ENCODE measurements at regions of chr6 and their contacts with region 1.

Region 1: DNA sequence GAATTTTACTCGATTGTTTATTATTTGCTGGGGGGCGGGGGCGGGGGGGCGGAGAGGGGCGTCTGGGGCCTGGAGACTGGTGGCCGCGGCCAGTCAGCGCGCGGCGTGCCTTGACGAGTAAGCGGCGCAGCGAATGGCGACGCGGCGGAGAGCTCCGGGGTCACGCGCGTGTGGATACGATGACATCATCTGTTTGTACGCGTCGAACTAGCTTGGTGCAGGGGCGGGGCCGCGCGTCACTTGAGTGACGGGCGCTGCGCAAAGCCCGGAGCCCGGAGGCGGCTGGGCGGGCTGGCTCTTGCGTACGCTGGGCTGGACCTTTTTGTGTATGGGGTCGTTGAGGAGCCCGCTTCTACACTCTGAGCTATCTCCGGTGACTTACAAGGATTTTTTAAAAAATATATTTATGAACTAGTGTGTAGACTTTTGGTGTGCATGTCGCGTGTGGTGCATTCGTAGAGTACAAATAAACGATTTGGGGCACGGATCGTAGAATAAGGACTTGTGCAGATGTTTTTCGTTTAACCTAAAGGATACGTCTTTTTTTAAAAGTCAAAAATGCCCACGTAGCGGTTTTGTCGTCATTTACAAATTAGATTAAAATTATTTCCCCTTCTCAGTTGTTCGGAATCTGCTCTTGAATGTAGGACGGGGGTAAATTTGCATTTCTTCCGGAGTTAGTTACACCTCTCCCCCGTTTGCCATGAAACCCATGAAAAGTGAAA is 2.2 kb upstream of the FOXO3 start:
- DNase-seq: peak; percentile 94 to 99 (median 96)
- ATAC-seq: peak; percentile 67 to 74
- H3K4me3 Mint-ChIP-seq: peak overlapping the region; percentile 90 to 98 (median 96)
- H3K27ac Mint-ChIP-seq: peak overlapping the region; percentile 93 to 100 (median 98)
- H3K4me1 Mint-ChIP-seq: peaks cover 13 to 33% (median 22%) of the 10 kb centered on the region in 4 donors
- H3K27me3 Mint-ChIP-seq: peaks cover 0 to 6% (median 0%) of the 10 kb centered on the region in 5 donors

Region 2: DNA sequence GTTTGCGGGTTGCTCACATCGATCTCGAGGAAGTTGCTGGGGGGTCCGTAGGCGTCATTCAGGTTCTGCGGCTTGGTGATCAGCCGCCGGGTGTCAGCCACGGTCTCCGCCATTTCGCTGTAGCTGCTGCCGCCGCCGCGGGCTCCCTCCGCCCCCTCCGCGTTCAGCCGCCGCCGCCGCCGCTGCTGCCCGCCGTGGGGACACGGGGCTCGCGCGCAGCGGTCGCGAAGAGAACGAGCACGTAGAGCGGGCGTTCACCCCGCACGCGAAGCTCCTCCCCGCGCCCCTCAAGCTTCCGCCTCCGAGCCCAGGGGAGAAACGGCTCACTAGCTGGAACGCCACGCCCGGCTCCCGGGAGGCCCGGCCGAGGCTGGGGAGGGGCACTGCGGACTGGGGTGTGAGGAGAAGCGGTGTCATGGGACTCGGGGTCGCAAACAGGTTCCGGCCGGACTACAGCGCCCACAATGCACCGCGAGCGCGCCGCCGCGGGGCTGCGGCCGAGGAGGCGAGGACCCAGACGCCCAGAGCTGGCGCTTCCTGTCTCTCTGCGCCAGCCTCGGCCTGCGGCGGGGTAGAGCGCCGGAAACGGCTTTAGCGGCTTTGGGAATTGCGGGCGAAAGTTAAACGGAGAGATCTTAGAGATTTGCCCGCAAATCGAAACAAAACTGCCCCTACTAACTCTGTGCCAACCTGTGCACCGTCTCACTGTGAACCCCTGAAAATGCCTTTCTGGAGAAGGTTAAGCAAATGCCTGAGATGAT is 297.5 kb before region 1 on chr6 and contains the start of gene SNX3:
- POLR2A ChIA-PET with region 1: interaction called, 15 read pairs
- DNase-seq: peak; percentile 78 to 95 (median 87)
- ATAC-seq: peak; percentile 82 to 83
- H3K4me3 Mint-ChIP-seq: peak within 1 kb of the TSS; percentile 86 to 97 (median 92)
- H3K27ac Mint-ChIP-seq: peak within 1 kb of the TSS; percentile 93 to 99 (median 96)
- H3K4me1 Mint-ChIP-seq: peaks cover 5 to 44% (median 27%) of the 10 kb centered on the region in 4 donors
- H3K27me3 Mint-ChIP-seq: no peaks in the 10 kb centered on the region
- polyA plus RNA-seq, gene SNX3: 163 to 227 (median 176) TPM

Region 3: DNA sequence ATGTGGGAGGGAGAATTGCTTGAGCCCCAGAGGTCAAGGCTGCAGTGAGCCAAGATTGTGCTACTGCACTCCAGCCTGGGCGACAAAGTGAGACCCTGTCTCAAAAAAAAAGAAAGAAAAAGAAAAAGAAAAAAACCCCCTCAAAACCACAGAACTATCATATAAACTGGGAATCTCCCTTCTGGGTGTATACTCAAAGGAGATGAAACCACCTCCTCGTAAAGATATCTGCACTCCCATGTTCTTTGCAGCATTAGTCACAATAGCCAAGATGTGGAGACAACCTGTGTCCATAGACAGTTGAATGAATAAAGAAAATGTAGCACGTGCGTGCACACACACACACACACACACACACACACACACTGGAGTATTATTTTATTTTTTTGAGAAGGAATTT is 272.2 kb before region 1 on chr6:
- POLR2A ChIA-PET with region 1: no interaction called
- DNase-seq: no peak
- ATAC-seq: no peak
- H3K4me3 Mint-ChIP-seq: no peak overlapping the region
- H3K27ac Mint-ChIP-seq: no peak overlapping the region
- H3K4me1 Mint-ChIP-seq: peaks cover 0 to 5% (median 2%) of the 10 kb centered on the region in 4 donors
- H3K27me3 Mint-ChIP-seq: no peaks in the 10 kb centered on the region

Region 4: DNA sequence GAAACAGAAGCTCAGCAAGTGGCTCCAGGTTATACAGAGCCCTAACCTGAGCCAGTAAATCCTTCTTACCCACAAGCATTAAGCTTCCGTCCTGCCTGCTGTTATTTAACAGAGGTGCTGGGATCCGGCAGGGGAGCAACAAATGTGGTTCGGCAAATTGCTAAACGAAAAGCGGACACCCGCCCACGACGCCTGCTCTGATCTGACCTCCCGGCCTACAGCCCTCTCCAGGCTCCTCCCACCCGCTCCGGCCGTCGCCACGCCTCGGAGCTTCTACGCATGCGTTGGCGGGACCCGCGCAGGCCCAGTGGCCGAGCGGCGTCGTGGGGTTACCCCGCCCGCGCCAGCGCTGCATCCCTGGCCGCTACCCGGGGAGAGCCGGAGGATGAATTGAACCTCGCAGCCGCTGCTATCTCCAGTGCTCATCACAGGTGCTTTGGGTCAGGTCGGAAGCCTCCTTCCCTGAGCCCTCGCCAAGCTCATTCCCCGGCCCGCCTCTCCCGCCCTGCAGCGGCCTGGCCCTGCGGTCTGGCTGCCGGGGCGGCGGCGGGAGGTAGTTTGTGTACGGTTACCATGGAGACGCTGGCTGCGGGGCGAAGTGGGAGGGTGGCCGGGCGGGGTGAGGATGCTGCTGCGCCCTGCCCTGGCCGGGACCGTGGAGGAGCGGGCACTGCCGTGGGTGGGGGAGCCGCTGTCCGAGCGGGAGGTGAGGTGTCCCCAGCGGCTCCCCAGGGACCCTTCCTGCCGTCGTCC is 289.8 kb after region 1 on chr6 and contains the start of gene ARMC2:
- POLR2A ChIA-PET with region 1: interaction called, 10 read pairs
- DNase-seq: peak; percentile 72 to 94 (median 84)
- ATAC-seq: peak; percentile 80 to 89
- H3K4me3 Mint-ChIP-seq: peak within 1 kb of the TSS; percentile 84 to 92 (median 90)
- H3K27ac Mint-ChIP-seq: peak within 1 kb of the TSS; percentile 76 to 95 (median 91)
- H3K4me1 Mint-ChIP-seq: peaks cover 10 to 33% (median 15%) of the 10 kb centered on the region in 4 donors
- H3K27me3 Mint-ChIP-seq: no peaks in the 10 kb centered on the region
- polyA plus RNA-seq, gene ARMC2: 2.4 to 4.9 (median 2.8) TPM

Region 5: DNA sequence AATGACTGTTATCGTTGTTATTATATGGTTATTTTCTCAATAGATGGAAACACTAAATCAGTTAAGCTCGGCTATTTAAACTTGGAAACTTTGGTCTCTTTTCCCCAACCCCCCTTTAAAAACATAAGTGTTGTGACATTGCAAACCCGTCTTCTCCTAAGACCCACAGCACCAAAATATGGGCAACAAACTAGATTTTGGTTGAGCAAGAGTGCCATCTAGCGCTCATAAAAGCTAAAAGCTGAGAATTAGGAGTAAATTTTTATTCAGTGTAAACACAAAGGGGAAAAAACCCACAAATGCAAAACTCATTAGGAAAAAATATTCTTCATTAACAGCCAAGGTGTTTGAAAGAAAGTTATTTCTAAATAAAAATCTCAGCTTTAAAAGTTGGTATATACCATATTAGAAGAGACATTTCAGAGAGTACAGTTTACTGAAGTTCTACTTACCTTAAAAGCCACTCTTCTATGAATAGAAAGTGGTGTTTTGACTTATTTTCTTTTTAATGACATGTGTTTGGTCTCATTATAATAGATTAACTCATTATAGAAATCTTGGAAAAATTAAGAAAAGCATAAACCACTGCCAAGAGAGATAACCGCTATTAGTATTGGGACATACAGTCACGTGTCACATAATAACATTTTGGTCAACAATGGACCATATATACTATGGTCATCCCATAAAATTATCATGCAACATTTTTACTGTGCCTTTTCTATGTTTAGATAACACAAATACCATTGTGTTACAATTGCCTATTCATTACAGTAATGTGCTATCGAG is 515.0 kb after region 1 on chr6:
- POLR2A ChIA-PET with region 1: interaction called, 10 read pairs
- DNase-seq: peak in 9 of 10 donors; percentile 27 to 77 (median 65)
- ATAC-seq: peak; percentile 63 to 73
- H3K4me3 Mint-ChIP-seq: peak overlapping the region in 6 of 10 donors; percentile 1 to 28 (median 2)
- H3K27ac Mint-ChIP-seq: peak overlapping the region in 3 of 10 donors; percentile 7 to 53 (median 9)
- H3K4me1 Mint-ChIP-seq: peaks cover 10 to 41% (median 25%) of the 10 kb centered on the region in 4 donors
- H3K27me3 Mint-ChIP-seq: no peaks in the 10 kb centered on the region

Region 6: GRCh38 chr6:109095027-109095834 is 536.7 kb after region 1 on chr6 and contains the start of gene CEP57L1:
- POLR2A ChIA-PET with region 1: interaction called, 32 read pairs
- DNase-seq: peak; percentile 88 to 97 (median 94)
- ATAC-seq: peak; percentile 75 to 76
- H3K4me3 Mint-ChIP-seq: peak within 1 kb of the TSS; percentile 88 to 98 (median 94)
- H3K27ac Mint-ChIP-seq: peak within 1 kb of the TSS; percentile 97 to 100 (median 99)
- H3K4me1 Mint-ChIP-seq: peaks cover 24 to 56% (median 51%) of the 10 kb centered on the region in 4 donors
- H3K27me3 Mint-ChIP-seq: no peaks in the 10 kb centered on the region
- polyA plus RNA-seq, gene CEP57L1: 5.4 to 9.5 (median 6.2) TPM

Measured in naive thymus-derived CD8-positive, alpha-beta T cell (primary cell).